Panc1 (cell line): ENCODE measurements at regions of chr11 and their contacts with region 1.

Region 1: DNA sequence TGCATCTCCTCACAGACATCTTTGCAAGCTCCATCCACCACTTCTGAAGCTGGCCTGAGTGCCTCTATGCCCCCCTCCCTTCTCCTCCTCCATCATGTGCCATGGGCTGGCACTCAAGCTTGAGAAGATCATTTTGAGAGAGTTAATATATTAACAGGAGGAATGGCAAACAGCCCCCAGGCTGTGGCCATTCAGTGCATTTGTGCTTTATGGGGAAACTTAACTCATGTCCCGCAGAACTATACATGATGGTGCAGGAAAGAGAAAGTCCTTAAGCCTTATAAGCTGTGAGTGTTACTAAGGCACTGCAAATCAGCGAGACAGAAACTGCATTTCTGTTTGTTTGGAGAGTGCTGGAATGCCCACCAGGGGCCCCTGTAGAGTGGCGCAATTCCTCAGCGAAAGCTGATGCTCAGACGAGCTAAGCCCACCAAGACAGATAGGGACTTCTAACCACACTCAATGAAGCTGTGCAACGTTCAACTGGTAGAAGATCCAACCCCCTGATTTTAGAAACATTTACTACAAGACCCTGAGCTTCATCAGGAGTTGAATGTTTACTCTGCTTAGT is 26.8 kb upstream of the PHLDA2 start:
- DNase-seq: no peak
- ATAC-seq: no peak
- H3K4me3 ChIP-seq: no peak overlapping the region
- H3K27ac ChIP-seq: no peak overlapping the region
- H3K4me1 ChIP-seq: no peaks in the 10 kb centered on the region
- H3K27me3 ChIP-seq: no peaks in the 10 kb centered on the region
- CTCF ChIP-seq: no peak; the same call in 1 of the 2 replicates

Region 2: GRCh38 chr11:2877474-2877873 is 78.5 kb before region 1 on chr11:
- CTCF ChIA-PET with region 1: no interaction called
- POLR2A ChIA-PET with region 1: no interaction called
- in situ Hi-C with region 1: no loop called
- intact Hi-C with region 1: no loop called
- DNase-seq: no peak
- ATAC-seq: no peak
- H3K4me3 ChIP-seq: no peak overlapping the region
- H3K27ac ChIP-seq: no peak overlapping the region
- H3K4me1 ChIP-seq: no peaks in the 10 kb centered on the region
- H3K27me3 ChIP-seq: no peaks in the 10 kb centered on the region
- CTCF ChIP-seq: no peak

Region 3: DNA sequence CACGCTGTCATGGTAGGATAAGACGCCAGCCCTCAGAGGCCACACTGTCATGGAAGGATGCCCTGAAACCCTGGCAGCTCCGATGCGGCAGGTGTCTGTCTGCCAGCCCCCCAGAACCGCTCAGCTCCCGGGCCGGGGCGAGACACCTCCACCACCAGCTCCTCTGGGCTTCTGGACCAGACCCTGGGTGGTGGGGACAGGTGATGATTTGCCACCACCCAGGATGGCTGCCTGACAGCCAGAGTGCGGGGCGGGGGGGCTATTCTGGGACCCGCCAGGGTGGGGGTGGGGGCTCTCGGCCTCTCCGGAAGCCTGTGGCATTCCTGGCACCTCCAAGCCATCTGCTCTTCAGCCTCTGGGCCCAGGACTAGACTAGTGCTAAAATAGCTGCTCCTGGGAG is 36.2 kb before region 1 on chr11:
- CTCF ChIA-PET with region 1: no interaction called
- POLR2A ChIA-PET with region 1: interaction called, 12 read pairs
- in situ Hi-C with region 1: no loop called
- intact Hi-C with region 1: no loop called
- DNase-seq: no peak
- ATAC-seq: no peak
- H3K4me3 ChIP-seq: no peak overlapping the region
- H3K27ac ChIP-seq: no peak overlapping the region
- H3K4me1 ChIP-seq: peaks cover 11% of the 10 kb centered on the region
- H3K27me3 ChIP-seq: no peaks in the 10 kb centered on the region
- CTCF ChIP-seq: no peak